Right cardiac atrium (tissue), 5 donors: ENCODE measurements at regions of chr4 and their contacts with region 1.

Region 1: DNA sequence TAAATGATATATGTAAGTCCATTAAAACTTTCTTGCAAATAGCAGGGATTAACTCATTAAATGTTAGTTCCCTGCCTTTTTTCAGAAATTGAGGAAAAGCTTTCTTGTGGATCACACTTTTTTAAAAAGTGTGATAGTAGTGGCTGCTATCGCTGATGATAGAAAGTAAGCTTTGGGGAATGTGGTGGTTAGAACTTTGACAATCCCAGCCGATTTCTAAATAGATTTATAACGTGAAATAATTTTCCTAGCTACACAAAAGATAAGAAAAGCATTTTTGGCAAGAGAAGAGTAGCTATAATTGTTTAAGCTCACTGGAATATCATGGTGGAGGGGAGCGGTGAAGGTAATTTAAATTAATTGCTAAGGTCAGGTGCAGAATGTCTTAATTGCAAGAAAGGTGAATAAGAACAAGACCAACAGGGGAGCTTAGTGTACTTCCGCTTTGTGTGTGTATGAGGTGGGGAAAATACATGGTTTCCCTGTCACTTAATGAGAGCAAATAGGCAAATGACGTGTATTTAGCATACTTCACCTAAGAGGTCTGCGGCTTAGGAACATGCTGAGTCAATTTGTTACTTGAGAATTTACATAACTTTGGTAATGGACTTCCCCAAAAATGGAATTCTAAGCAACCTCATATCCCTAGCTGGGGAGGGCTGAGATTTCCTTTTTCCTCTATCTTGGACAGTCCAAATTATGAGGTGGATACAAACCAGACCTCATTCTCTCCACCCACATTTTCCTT is 11.7 kb upstream of the IL21 start:
- DNase-seq: no peak
- ATAC-seq: no peak
- H3K4me3 ChIP-seq: no peak overlapping the region
- H3K27ac ChIP-seq: no peak overlapping the region
- H3K4me1 ChIP-seq: no peaks in the 10 kb centered on the region
- H3K27me3 ChIP-seq: no peaks in the 10 kb centered on the region

Region 2: GRCh38 chr4:122700178-122700725 is 67.7 kb after region 1 on chr4:
- intact Hi-C with region 1: loop called in 1 of 4 experiments (anchors 2 kb)
- DNase-seq: peak; percentile 60 to 90 (median 85)
- ATAC-seq: peak; percentile 96 to 98
- H3K4me3 ChIP-seq: peak overlapping the region; percentile 76
- H3K27ac ChIP-seq: peak overlapping the region; percentile 82
- H3K4me1 ChIP-seq: no peaks in the 10 kb centered on the region
- H3K27me3 ChIP-seq: no peaks in the 10 kb centered on the region